ENCODE measurements at regions of chr10 and their contacts with region 1.

Region 1: GRCh38 chr10:124791378-124792348 is at the start of gene EEF1AKMT2:
- DNase-seq: peak; percentile 79
- ATAC-seq: peak; percentile 98
- H3K4me3 ChIP-seq: peak within 1 kb of the TSS; percentile 84 to 92 (median 88)
- H3K27ac ChIP-seq: peak within 1 kb of the TSS; percentile 88
- H3K4me1 ChIP-seq: peaks cover 26% of the 10 kb centered on the region
- H3K27me3 ChIP-seq: no peaks in the 10 kb centered on the region; a peak in 2 of 5 replicates
- CTCF ChIP-seq: peak; percentile 66
- EP300 ChIP-seq: peak; percentile 13 to 22; a peak in 1 of 4 replicates
- POLR2A ChIP-seq: peak; percentile 87 to 90
- RAD21 ChIP-seq: peak; percentile 65; the same call in 1 of the 2 replicates
- total RNA-seq, gene EEF1AKMT2: 19.3 and 24.1 TPM in 2 replicates

Region 2: GRCh38 chr10:124802313-124802675 is 10.6 kb after region 1 on chr10:
- CTCF ChIA-PET with region 1: no interaction called
- POLR2A ChIA-PET with region 1: interaction called, 53 read pairs
- in situ Hi-C with region 1: no loop called
- intact Hi-C with region 1: no loop called
- DNase-seq: no peak
- ATAC-seq: no peak
- H3K4me3 ChIP-seq: peak overlapping the region; percentile 74 to 99 (median 92)
- H3K27ac ChIP-seq: peak overlapping the region; percentile 73
- H3K4me1 ChIP-seq: peaks cover 44% of the 10 kb centered on the region
- H3K27me3 ChIP-seq: no peaks in the 10 kb centered on the region; a peak in 2 of 5 replicates
- CTCF ChIP-seq: no peak
- EP300 ChIP-seq: no peak
- POLR2A ChIP-seq: no peak
- RAD21 ChIP-seq: no peak

Measured in HepG2 (cell line).